ENCODE measurements at regions of chr6 and their contacts with region 1.

Region 1: DNA sequence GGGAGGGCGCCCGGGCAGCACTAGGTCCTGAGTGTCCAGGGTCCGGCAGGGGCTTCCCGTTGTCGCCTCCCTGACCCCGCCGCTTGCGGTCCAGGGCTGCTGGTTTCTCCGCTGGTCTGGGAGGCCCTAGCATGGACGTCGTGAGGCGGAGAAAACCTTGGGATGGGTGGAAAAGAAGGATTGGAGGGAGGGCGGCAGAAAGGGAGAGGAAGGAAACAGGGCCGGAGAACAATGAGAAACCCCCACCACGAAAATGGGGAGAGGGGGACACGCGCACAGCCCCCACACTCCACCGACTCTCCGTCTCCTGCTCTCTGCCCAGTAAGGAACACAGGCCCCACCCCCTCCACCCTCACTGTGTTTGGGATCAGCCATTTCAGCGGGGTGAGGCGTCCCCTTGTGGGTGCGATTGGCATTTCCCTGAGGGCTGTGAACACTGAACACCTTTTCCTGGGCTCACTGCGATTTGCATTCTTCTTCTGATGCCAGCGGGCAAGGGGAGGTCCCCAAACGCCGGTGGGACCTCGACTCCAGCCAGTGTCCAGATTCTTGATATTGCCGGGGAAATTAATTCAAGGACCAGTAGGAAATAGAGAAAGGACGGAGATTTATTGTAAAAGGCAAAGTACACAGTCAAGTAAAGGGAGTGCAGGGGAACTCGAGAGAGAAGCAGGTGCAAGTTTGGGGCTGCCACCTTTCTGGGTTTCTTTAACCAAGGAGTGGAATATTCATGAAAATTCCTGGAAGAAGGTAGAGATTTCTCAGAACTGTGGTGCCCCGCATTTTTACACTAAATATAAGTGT is 3.3 kb upstream of the RAET1G start:
- DNase-seq: peak; percentile 94 to 95
- H3K4me3 ChIP-seq: peak overlapping the region; percentile 50 to 51
- H3K27ac ChIP-seq: peak overlapping the region; percentile 67
- H3K4me1 ChIP-seq: peaks cover 23% of the 10 kb centered on the region
- H3K27me3 ChIP-seq: no peaks in the 10 kb centered on the region
- CTCF ChIP-seq: peak; percentile 97 to 98 (median 97)
- POLR2A ChIP-seq: no peak

Region 2: GRCh38 chr6:149834513-149835481 is 91.4 kb before region 1 on chr6:
- intact Hi-C with region 1: loop called (anchors 5 kb)
- DNase-seq: no peak
- H3K4me3 ChIP-seq: no peak overlapping the region
- H3K27ac ChIP-seq: no peak overlapping the region
- H3K4me1 ChIP-seq: no peaks in the 10 kb centered on the region
- H3K27me3 ChIP-seq: no peaks in the 10 kb centered on the region
- CTCF ChIP-seq: peak; percentile 89 to 94 (median 93)
- POLR2A ChIP-seq: no peak

Region 3: GRCh38 chr6:149863697-149864577 is 62.2 kb before region 1 on chr6 and contains the start of gene LRP11:
- intact Hi-C with region 1: loop called (anchors 2 kb)
- DNase-seq: peak in 1 of 2 donors; percentile 79
- H3K4me3 ChIP-seq: peak within 1 kb of the TSS; percentile 63 to 68
- H3K27ac ChIP-seq: peak within 1 kb of the TSS; percentile 96
- H3K4me1 ChIP-seq: peaks cover 36% of the 10 kb centered on the region
- H3K27me3 ChIP-seq: no peaks in the 10 kb centered on the region
- CTCF ChIP-seq: no peak
- POLR2A ChIP-seq: peak in 1 of 2 donors; percentile 71
- total RNA-seq, gene LRP11: 35.1 TPM